CD4-positive, alpha-beta T cell (primary cell): ENCODE measurements at regions of chr7 and their contacts with region 1.

Region 1: DNA sequence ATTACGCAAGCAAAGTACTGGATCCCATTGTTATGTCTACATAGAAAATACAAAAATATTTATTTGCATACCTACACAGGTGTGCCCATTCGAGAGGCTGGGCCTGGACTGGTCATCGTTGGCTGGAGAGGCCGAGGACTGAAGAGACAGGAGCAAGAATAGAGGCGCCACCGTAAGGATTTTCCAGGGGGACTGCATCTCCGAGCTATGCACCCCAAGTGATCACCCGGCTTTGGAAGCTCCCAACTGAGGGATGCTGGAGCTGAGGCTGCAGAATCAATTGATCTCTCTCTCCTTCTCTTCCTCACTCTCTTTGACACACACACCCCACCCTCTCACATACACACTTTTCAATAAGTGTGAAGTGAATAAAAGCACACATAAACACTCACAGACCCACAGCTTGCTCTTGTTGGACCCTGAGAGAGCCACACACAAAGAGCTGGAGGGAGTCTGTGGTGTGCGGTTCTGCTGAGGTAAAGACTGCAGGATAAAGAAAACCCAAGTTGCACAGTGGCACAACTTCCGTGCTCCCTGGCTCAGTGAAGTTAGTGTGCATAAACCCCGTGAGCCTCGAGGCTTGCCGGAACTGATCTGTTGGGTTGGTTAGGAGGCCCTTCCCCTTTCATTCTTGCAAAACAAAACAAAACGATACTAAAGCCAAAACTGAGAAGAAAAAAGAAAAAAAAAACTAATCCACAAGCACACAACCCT is at the start of gene AOAH:
- DNase-seq: peak; percentile 56 to 93 (median 74)
- ATAC-seq: peak; percentile 96
- H3K4me3 ChIP-seq: peak within 1 kb of the TSS; percentile 58
- H3K4me3 Mint-ChIP-seq: peak within 1 kb of the TSS; percentile 78
- H3K27ac ChIP-seq: peak within 1 kb of the TSS; percentile 44 to 51
- H3K27ac Mint-ChIP-seq: peak within 1 kb of the TSS; percentile 94
- H3K4me1 ChIP-seq: peaks cover 59% of the 10 kb centered on the region
- H3K4me1 Mint-ChIP-seq: peaks cover 95% of the 10 kb centered on the region
- H3K27me3 ChIP-seq: no peaks in the 10 kb centered on the region
- H3K27me3 Mint-ChIP-seq: no peaks in the 10 kb centered on the region
- CTCF ChIP-seq: no peak
- total RNA-seq, gene AOAH: 27.5 to 30.3 TPM

Region 2: GRCh38 chr7:36677769-36678437 is 46.2 kb before region 1 on chr7:
- CTCF ChIA-PET with region 1: no interaction called
- POLR2A ChIA-PET with region 1: interaction called, 19 read pairs
- intact Hi-C with region 1: loop called in 1 of 2 experiments (anchors 2 kb)
- DNase-seq: peak in 2 of 14 experiments; percentile 26 to 48
- ATAC-seq: peak; percentile 39
- H3K4me3 ChIP-seq: no peak overlapping the region
- H3K4me3 Mint-ChIP-seq: peak overlapping the region; percentile 76
- H3K27ac ChIP-seq: peak overlapping the region; percentile 31 to 38
- H3K27ac Mint-ChIP-seq: peak overlapping the region; percentile 90
- H3K4me1 ChIP-seq: peaks cover 15% of the 10 kb centered on the region
- H3K4me1 Mint-ChIP-seq: peaks cover 58% of the 10 kb centered on the region
- H3K27me3 ChIP-seq: no peaks in the 10 kb centered on the region
- H3K27me3 Mint-ChIP-seq: no peaks in the 10 kb centered on the region
- CTCF ChIP-seq: no peak

Region 3: DNA sequence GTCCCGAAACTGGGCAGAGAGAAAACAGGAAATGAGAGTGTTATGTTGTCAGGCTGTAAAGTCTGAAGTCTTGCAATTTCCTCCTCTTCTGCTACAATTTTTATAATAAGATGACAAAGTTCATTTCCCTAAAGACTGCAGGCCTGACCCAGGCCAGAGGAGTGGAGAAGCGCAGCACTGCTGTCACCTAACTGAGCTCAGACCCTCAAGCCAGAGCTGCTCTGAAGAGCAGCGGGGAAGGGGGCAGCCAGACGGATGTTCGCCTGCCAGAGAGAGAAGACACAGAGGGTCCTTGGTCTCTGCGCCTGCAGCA is 12.7 kb after region 1 on chr7:
- CTCF ChIA-PET with region 1: no interaction called
- POLR2A ChIA-PET with region 1: interaction called, 11 read pairs
- intact Hi-C with region 1: no loop called
- DNase-seq: peak in 3 of 14 experiments; percentile 41 to 62 (median 58)
- ATAC-seq: peak; percentile 39
- H3K4me3 ChIP-seq: peak overlapping the region; percentile 1
- H3K4me3 Mint-ChIP-seq: no peak overlapping the region
- H3K27ac ChIP-seq: peak overlapping the region in 1 of 2 donors; percentile 4
- H3K27ac Mint-ChIP-seq: peak overlapping the region; percentile 61
- H3K4me1 ChIP-seq: peaks cover 13% of the 10 kb centered on the region
- H3K4me1 Mint-ChIP-seq: peaks cover 27% of the 10 kb centered on the region
- H3K27me3 ChIP-seq: no peaks in the 10 kb centered on the region
- H3K27me3 Mint-ChIP-seq: no peaks in the 10 kb centered on the region
- CTCF ChIP-seq: no peak

Region 4: DNA sequence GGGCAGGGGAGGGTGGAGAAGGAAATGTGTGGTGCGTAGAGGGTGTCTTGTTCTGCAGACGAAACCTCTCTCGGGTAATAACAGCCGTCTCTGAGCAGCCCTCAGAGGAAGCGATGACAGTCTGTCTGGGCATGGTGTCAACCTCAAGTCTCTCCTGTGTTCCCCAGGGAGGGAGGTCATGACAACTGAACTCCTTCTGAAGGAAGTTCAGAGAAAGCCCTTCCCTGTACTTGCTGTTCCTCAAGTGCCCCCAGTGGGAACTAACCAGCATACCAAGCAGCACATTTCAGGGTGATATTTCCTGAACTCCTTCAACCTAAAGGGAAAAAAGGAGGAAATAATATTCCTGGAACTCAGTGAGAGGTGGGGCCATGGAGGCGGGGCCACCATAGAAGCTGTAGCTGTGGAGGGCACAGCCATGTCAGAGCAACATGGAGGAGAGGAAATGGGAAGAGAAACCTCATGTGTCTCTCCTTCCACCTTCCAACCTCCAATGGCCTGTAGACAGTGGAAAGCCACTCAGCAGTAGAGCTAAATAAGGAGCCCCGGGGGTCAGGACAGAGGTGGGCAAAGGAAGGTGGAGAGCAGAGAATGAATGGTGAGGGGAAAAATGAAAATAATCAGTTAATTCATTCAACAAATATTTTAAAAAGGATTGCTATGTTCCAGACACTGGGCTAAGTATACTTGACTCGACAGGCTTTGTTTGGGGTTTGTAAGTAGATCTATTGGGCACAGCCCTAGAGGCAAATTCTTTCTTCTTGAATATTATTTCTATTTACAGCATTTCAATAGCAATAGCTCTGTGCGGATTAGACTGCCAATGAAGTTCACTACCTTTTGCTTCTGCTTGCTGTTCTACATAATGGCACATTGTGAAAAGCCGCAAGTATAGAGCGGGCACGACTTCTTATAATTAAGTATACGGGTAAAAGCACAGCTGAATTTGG is 61.2 kb after region 1 on chr7:
- CTCF ChIA-PET with region 1: no interaction called
- POLR2A ChIA-PET with region 1: interaction called, 59 read pairs
- intact Hi-C with region 1: loop called in 1 of 2 experiments (anchors 1 kb)
- DNase-seq: peak; percentile 41 to 93 (median 58)
- ATAC-seq: peak; percentile 79
- H3K4me3 ChIP-seq: no peak overlapping the region
- H3K4me3 Mint-ChIP-seq: peak overlapping the region; percentile 53
- H3K27ac ChIP-seq: peak overlapping the region; percentile 61 to 71
- H3K27ac Mint-ChIP-seq: peak overlapping the region; percentile 86
- H3K4me1 ChIP-seq: peaks cover 63% of the 10 kb centered on the region
- H3K4me1 Mint-ChIP-seq: peaks cover 82% of the 10 kb centered on the region
- H3K27me3 ChIP-seq: no peaks in the 10 kb centered on the region
- H3K27me3 Mint-ChIP-seq: no peaks in the 10 kb centered on the region
- CTCF ChIP-seq: no peak